ENCODE measurements at regions of chr16 and their contacts with region 1.

Region 1: GRCh38 chr16:31333686-31334649 is 21.0 kb upstream of the ITGAX start:
- DNase-seq: peak in 2 of 3 donors; percentile 47
- H3K4me3 ChIP-seq: no peak overlapping the region
- H3K4me3 Mint-ChIP-seq: no peak overlapping the region
- H3K27ac ChIP-seq: no peak overlapping the region
- H3K27ac Mint-ChIP-seq: peak overlapping the region in 6 of 7 donors; percentile 6 to 83 (median 54)
- H3K4me1 ChIP-seq: no peaks in the 10 kb centered on the region
- H3K4me1 Mint-ChIP-seq: peaks cover 28% of the 10 kb centered on the region
- H3K27me3 ChIP-seq: no peaks in the 10 kb centered on the region
- H3K27me3 Mint-ChIP-seq: peaks cover 0 to 6% (median 0%) of the 10 kb centered on the region in 3 donors
- CTCF ChIP-seq: peak; percentile 73

Region 2: DNA sequence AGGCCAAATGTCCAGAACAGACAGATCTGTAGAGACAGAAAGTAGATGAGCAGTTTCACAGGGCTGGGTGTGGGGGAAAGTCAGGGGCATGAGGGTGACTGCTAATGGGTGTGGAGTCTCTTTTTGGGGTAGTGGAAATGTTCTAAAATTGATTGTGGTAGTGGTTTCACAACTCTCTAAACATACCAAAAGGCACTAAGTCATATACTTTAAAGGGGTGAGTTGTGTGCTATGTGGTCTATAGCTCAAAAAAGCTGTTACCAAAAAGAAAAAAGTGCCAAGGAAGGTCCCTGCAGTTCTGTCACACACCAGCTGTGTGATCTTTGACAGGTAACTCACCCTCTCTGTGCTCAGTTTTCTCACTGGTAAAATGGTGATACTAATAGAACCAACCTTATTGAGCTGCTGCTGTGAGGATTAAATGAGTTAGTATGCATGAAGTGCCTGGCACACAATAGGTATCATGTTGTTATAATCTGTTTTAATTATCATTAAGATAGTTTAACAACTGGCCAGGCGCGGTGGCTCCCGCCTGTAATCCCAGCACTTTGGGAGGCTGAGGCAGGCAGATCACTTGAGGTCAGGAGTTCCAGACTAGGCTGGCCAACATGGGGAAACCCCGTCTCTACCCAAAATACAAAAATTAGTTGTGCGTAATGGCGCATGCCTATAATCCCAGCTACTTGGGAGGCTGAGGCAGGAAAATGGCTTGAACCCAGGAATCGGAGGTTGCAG is 31.3 kb after region 1 on chr16:
- intact Hi-C with region 1: loop called (anchors 5 to 10 kb)
- DNase-seq: no peak
- H3K4me3 ChIP-seq: no peak overlapping the region
- H3K4me3 Mint-ChIP-seq: peak overlapping the region; percentile 0 to 17
- H3K27ac ChIP-seq: peak overlapping the region in 1 of 2 donors; percentile 29
- H3K27ac Mint-ChIP-seq: peak overlapping the region; percentile 50 to 93 (median 81)
- H3K4me1 ChIP-seq: peaks cover 53 to 64% of the 10 kb centered on the region in 2 donors
- H3K4me1 Mint-ChIP-seq: peaks cover 65% of the 10 kb centered on the region
- H3K27me3 ChIP-seq: no peaks in the 10 kb centered on the region
- H3K27me3 Mint-ChIP-seq: peaks cover 0 to 4% (median 0%) of the 10 kb centered on the region in 3 donors
- CTCF ChIP-seq: no peak

Region 3: DNA sequence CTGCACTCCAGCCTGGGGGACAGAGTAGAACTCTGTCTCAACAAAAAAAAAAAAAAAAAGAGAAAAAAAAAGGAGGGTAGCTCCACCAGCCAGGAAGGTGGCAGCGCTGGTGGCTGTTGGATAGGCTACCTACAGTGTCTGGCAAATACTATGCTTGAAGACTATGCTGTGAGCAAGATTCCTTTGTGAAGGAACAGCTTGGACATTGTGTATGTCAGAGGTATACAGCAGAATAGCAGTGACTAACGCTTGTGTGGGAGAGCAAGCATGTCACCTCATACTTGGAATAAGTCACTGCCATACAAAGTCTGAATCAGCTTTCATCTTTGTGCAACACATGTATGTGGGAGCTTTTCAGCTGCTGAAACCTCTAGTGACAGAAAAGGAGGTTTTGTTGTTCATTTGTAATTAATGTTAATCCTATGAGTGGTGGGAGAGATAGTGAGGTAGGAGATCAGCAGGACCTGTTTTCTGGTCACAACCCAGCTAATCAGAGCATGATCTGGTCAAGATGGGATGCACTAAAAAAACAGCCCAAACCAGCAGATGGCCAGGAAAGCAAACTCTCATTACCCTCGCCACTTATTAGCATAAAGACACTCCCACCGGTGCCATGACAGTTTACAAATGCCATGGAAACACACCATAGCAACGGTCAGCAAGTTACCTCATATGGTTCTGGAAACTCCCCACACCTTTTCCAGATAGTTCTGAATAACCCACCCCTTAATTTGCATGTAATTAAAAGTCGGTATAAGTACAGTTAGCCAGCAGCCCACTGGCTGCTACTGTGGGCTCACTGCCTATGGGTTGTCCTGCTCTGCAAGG is 52.4 kb after region 1 on chr16:
- intact Hi-C with region 1: no loop called
- DNase-seq: peak; percentile 67 to 81 (median 80)
- H3K4me3 ChIP-seq: no peak overlapping the region
- H3K4me3 Mint-ChIP-seq: no peak overlapping the region
- H3K27ac ChIP-seq: peak overlapping the region in 1 of 2 donors; percentile 5
- H3K27ac Mint-ChIP-seq: peak overlapping the region in 6 of 7 donors; percentile 15 to 80 (median 64)
- H3K4me1 ChIP-seq: peaks cover 0 to 6% of the 10 kb centered on the region in 2 donors
- H3K4me1 Mint-ChIP-seq: peaks cover 14% of the 10 kb centered on the region
- H3K27me3 ChIP-seq: no peaks in the 10 kb centered on the region
- H3K27me3 Mint-ChIP-seq: peaks cover 3 to 6% (median 3%) of the 10 kb centered on the region in 3 donors
- CTCF ChIP-seq: no peak

Measured in CD14-positive monocyte (primary cell).